BJ (cell line): ENCODE measurements at regions of chr9 and their contacts with region 1.

Region 1: GRCh38 chr9:132575005-132575609 is 7.3 kb upstream of the BARHL1 start:
- DNase-seq: no peak
- H3K4me3 ChIP-seq: no peak overlapping the region
- H3K27me3 ChIP-seq: peaks cover 35% of the 10 kb centered on the region
- CTCF ChIP-seq: peak; percentile 80

Region 2: DNA sequence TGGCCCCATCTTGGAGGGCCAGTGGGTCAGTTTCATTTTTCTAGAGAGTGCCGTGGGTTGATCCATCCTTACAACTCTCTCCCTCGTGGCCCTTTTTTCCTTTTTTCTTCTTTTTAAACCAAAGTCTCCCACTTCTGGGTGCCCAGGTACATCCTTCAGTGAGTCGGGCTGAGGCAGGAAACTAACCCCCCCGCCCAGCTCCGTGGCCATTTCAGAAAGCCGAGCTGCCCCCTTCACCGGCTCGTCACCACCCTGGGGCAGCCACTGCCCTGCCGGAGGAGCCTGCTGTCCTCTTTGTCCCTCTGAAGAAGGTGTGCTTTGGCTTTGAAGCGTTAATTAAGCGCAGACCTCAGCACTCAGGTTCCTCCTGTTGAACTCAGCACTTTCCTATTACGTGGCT is 159.9 kb before region 1 on chr9:
- CTCF ChIA-PET with region 1: interaction called, 10 read pairs
- POLR2A ChIA-PET with region 1: no interaction called
- DNase-seq: no peak
- H3K4me3 ChIP-seq: no peak overlapping the region
- H3K27me3 ChIP-seq: peaks cover 43% of the 10 kb centered on the region
- CTCF ChIP-seq: no peak

Region 3: GRCh38 chr9:132498531-132499210 is 76.4 kb before region 1 on chr9:
- CTCF ChIA-PET with region 1: interaction called, 12 read pairs
- POLR2A ChIA-PET with region 1: no interaction called
- DNase-seq: no peak
- H3K4me3 ChIP-seq: no peak overlapping the region
- H3K27me3 ChIP-seq: peaks cover 6% of the 10 kb centered on the region
- CTCF ChIP-seq: no peak

Region 4: GRCh38 chr9:132507746-132508469 is 67.2 kb before region 1 on chr9:
- CTCF ChIA-PET with region 1: interaction called, 55 read pairs
- POLR2A ChIA-PET with region 1: no interaction called
- DNase-seq: no peak
- H3K4me3 ChIP-seq: no peak overlapping the region
- H3K27me3 ChIP-seq: peaks cover 23% of the 10 kb centered on the region
- CTCF ChIP-seq: peak; percentile 84

Region 5: GRCh38 chr9:132560616-132561202 is 14.4 kb before region 1 on chr9:
- CTCF ChIA-PET with region 1: interaction called, 11 read pairs
- POLR2A ChIA-PET with region 1: no interaction called
- DNase-seq: no peak
- H3K4me3 ChIP-seq: no peak overlapping the region
- H3K27me3 ChIP-seq: peaks cover 15% of the 10 kb centered on the region
- CTCF ChIP-seq: no peak